Heart left ventricle (tissue), 16 donors: ENCODE measurements at regions of chr3 and their contacts with region 1.

Region 1: GRCh38 chr3:123218990-123219389 is 17.2 kb downstream of the SEC22A start:
- DNase-seq: no peak
- ATAC-seq: no peak
- H3K4me3 ChIP-seq: no peak overlapping the region
- H3K27ac ChIP-seq: no peak overlapping the region
- H3K4me1 ChIP-seq: peaks cover 0 to 14% (median 4%) of the 10 kb centered on the region in 12 donors
- H3K27me3 ChIP-seq: no peaks in the 10 kb centered on the region
- CTCF ChIP-seq: no peak
- POLR2A ChIP-seq: no peak

Region 2: DNA sequence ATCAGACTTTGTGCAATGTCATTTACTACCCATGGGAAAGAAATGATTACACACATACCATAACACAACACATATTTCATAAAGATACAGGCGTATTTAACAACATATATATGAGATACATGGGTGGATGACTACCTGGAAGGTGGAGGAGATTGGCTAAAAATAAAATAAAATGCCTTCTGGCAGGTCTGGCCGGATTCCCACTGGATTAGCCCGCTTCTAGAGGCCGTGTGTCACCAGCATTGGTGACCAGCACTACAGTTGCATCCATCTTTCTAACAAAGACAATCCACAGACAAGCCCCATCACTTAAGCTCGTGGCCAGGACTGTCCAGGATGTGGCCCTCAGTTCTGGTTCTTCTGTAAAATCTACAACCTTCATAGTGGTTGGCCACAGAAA is 38.2 kb before region 1 on chr3:
- intact Hi-C with region 1: no loop called
- DNase-seq: no peak
- ATAC-seq: no peak
- H3K4me3 ChIP-seq: no peak overlapping the region
- H3K27ac ChIP-seq: no peak overlapping the region
- H3K4me1 ChIP-seq: no peaks in the 10 kb centered on the region
- H3K27me3 ChIP-seq: no peaks in the 10 kb centered on the region
- CTCF ChIP-seq: no peak
- POLR2A ChIP-seq: no peak

Region 3: GRCh38 chr3:123201566-123202427 is 17.2 kb before region 1 on chr3 and contains the start of gene SEC22A:
- intact Hi-C with region 1: loop called in 1 of 10 experiments (anchors 2 kb)
- DNase-seq: peak; percentile 92 to 94 (median 93)
- ATAC-seq: peak; percentile 98 to 100 (median 99)
- H3K4me3 ChIP-seq: peak within 1 kb of the TSS; percentile 74 to 99 (median 96)
- H3K27ac ChIP-seq: peak within 1 kb of the TSS; percentile 56 to 93 (median 84)
- H3K4me1 ChIP-seq: peaks cover 0 to 22% (median 10%) of the 10 kb centered on the region in 12 donors
- H3K27me3 ChIP-seq: no peaks in the 10 kb centered on the region
- CTCF ChIP-seq: no peak
- POLR2A ChIP-seq: peak in 1 of 2 donors; percentile 80
- total RNA-seq, gene SEC22A: 7.6 to 27.0 (median 10.0) TPM